Activated naive CD8-positive, alpha-beta T cell treated with anti-CD3 and anti-CD28 coated beads, Interleukin-2, amount 10 ng/mL, durations not matched to agents 7 days and 5 days (primary cell): ENCODE measurements at regions of chr2 and their contacts with region 1.

Region 1: DNA sequence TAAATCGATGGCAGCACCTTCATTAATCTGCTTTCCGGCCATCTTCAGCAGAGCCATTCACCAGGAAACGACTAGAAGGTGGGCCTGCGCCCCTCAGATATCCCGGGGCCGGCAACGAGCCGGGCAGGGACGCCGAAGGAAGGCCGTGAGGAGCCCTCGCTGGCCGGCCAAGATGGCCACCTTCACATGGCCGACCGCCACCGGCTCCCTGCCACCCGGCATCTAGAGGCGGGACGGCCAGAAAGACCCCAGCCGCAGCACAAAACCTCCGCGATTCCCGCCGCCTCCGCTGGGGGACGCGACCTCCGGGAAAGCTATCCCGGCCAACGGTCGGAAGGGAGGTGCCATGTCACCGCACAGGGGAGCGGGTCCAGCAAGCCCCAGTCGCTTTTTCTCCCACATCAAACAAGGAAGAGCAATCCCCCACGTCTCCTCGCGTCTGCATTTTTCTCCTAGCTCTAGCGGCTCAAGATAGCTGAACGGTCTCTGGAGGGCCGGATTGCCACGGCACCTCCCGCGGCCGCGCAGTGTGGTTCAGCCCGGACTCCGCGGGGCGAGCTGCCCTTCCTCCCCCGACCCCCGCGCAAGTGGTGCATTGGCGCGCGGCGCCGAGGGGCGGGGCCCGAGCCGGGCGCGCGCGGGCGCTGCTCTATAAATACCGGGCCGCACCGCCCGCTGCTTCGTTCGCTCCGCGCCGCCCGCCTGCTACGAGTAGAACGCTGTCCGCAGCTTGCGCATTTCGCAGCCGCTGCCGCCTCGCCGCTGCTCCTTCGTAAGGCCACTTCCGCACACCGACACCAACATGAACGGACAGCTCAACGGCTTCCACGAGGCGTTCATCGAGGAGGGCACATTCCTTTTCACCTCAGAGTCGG is at the start of gene MAT2A:
- DNase-seq: peak; percentile 96
- ATAC-seq: peak; percentile 72
- H3K4me3 Mint-ChIP-seq: peak within 1 kb of the TSS; percentile 94
- H3K27ac Mint-ChIP-seq: peak within 1 kb of the TSS; percentile 94
- H3K4me1 Mint-ChIP-seq: peaks cover 33% of the 10 kb centered on the region
- H3K27me3 Mint-ChIP-seq: no peaks in the 10 kb centered on the region
- total RNA-seq, gene MAT2A: 218 to 222 TPM

Region 2: DNA sequence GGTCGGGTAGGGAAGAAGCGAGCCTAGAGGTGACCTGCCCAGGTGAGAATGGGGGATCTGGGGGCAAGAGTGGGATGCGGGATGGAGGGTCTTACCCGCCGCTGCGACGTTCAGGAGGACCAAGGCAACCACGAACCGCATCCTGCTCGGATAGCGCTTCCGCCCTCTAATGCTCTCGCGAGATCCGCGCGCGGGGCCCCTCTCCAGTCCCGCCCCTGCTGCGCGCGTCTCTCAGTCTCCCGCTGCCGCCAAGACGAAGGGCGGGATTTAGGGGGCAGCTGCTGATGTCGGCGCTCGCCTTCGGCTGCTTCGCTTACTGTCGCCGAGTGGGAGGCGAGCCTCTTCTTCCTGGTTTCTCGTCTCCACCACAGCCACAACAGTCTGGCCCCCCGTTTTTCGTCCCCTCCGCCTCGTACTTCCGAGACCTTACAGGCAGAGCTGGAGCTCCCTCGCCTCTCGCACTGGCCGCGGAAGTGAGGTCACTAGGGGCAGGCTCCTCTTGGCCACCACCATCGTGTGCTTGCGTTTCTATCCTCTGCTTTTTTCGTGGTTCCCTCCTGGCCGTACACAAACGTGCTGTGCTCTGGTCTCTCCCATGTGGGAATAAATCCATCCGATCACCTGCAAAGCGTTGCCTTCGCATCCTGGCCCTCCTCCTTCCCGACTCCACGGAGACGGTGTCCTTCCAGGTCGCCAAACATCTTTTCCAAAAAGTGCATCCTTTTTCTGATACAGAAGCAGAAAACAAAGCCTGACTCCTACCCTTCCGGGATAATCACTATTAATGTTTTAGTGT is 210.7 kb before region 1 on chr2 and contains the start of gene TGOLN2:
- POLR2A ChIA-PET with region 1: interaction called, 32 read pairs
- DNase-seq: peak; percentile 97
- ATAC-seq: peak; percentile 84
- H3K4me3 Mint-ChIP-seq: peak within 1 kb of the TSS; percentile 99
- H3K27ac Mint-ChIP-seq: peak within 1 kb of the TSS; percentile 100
- H3K4me1 Mint-ChIP-seq: peaks cover 25% of the 10 kb centered on the region
- H3K27me3 Mint-ChIP-seq: no peaks in the 10 kb centered on the region
- total RNA-seq, gene TGOLN2: 144 to 148 TPM

Region 3: DNA sequence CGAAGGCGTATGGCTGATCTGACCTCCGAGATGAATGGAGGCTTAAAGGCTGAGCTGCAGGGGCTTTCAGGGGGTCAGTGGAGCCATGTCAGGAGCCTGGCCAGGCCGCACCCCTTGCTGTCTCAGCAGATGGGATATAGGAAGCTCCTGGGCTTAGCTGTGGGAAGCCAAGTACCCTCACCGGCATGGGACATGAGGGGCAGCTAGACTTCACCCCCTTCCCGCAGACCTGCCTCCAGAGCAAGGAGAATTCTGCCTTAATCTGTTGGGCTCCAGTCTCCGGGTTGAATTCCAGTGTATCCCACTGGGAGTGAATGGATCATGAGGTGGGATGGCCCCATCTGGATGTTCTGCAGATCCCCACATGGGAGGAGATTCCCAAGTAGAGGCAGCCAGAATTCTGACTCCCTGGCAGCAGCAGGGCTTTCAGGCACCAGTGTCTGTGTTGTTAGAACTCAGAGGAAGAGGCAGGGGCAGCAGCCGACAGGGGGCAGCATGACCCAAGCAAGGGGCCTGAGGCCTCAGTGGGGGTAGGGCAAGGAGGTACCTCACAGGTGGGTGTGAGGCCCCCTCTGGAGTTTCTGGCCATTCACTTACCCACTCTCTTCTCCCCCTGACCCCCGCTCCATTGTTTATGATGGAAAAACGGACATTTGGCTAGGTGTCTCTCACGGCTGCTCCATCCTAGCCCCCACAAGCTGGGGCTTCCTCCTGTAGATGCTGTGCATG is 147.6 kb before region 1 on chr2:
- POLR2A ChIA-PET with region 1: interaction called, 23 read pairs
- DNase-seq: peak; percentile 84
- ATAC-seq: peak; percentile 68
- H3K4me3 Mint-ChIP-seq: no peak overlapping the region
- H3K27ac Mint-ChIP-seq: peak overlapping the region; percentile 38
- H3K4me1 Mint-ChIP-seq: peaks cover 8% of the 10 kb centered on the region
- H3K27me3 Mint-ChIP-seq: no peaks in the 10 kb centered on the region

Region 4: DNA sequence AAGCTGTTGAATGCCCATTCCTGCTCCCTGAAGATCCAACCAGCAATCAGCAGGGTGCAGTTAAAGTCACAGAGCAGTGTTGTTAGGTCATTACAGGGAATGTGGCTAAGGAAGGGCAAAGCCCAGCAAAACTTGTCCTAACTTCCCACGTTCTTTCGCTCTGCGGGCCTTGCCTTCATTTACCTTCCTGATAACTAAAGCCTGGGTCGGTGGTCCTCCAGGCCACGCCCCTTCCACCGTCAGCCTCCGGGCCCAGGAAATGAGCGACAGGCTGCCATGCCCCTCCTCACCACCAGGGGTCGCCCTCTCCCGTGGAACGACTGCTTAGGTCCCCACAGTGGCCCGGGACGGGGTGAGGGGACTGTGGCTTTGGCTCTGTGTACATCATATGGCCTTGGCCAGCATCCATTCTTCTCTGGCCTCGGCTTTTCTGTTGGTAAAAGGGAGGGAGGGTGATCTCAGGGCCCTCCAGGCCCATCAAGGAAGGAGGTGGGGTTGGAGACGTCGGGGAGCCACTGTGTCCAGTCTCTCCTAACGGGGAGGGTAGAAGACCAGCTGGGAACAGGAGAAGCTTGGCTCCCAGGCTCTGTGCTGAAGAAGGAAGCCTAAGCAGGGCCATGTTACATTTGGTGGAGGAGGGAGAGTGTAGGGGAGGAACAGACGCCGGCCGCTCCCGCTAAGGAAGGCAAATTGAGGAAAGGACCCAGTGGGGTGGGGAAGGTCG is 118.0 kb before region 1 on chr2:
- POLR2A ChIA-PET with region 1: interaction called, 113 read pairs
- DNase-seq: peak; percentile 95
- ATAC-seq: peak; percentile 55
- H3K4me3 Mint-ChIP-seq: peak overlapping the region; percentile 73
- H3K27ac Mint-ChIP-seq: peak overlapping the region; percentile 87
- H3K4me1 Mint-ChIP-seq: peaks cover 26% of the 10 kb centered on the region
- H3K27me3 Mint-ChIP-seq: no peaks in the 10 kb centered on the region

Region 5: GRCh38 chr2:85437488-85438284 is 101.0 kb before region 1 on chr2:
- POLR2A ChIA-PET with region 1: interaction called, 116 read pairs
- DNase-seq: peak; percentile 80
- ATAC-seq: peak; percentile 75
- H3K4me3 Mint-ChIP-seq: peak overlapping the region; percentile 84
- H3K27ac Mint-ChIP-seq: peak overlapping the region; percentile 93
- H3K4me1 Mint-ChIP-seq: peaks cover 33% of the 10 kb centered on the region
- H3K27me3 Mint-ChIP-seq: no peaks in the 10 kb centered on the region

Region 6: DNA sequence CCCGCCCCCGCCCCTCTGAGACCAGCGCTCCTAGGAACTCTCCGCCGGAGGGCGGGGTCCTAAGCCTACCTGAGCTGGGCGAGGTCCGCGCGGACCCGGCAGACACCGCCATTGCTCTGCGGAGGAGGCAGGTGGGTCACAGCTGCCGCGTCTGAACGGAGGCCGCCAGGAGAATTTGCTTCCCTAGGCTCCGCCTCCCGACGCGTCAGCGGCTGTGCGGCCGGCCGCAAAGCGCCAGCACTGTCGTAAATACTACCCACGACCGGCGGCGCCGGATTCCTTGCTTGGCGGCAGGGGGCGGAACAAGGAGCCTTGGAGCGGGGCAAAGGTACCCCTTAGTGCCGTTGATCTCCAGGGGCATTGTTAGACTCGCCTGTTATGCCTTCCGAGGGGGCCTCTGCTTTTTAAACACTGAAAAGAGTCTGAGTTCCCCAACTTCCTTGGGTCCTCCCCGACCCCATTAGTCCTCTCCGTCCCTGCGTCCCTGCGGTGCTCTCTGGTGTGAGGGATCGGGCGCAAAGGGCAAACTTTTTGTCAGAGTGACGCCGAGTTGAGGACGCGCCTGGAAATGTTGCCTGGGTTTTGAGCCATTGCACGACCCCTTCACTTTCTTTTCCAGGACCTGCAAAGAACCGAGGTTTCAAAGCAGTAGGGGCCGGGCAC is 22.7 kb after region 1 on chr2 and contains the start of gene GGCX:
- POLR2A ChIA-PET with region 1: interaction called, 24 read pairs
- DNase-seq: peak; percentile 89
- ATAC-seq: peak; percentile 95
- H3K4me3 Mint-ChIP-seq: peak within 1 kb of the TSS; percentile 97
- H3K27ac Mint-ChIP-seq: peak within 1 kb of the TSS; percentile 95
- H3K4me1 Mint-ChIP-seq: peaks cover 24% of the 10 kb centered on the region
- H3K27me3 Mint-ChIP-seq: no peaks in the 10 kb centered on the region
- total RNA-seq, gene GGCX: 24.8 to 26.8 TPM

Region 7: GRCh38 chr2:85595301-85596025 is 56.7 kb after region 1 on chr2 and contains the start of gene RNF181:
- POLR2A ChIA-PET with region 1: interaction called, 12 read pairs
- DNase-seq: peak; percentile 83
- ATAC-seq: peak; percentile 100
- H3K4me3 Mint-ChIP-seq: peak within 1 kb of the TSS; percentile 95
- H3K27ac Mint-ChIP-seq: peak within 1 kb of the TSS; percentile 93
- H3K4me1 Mint-ChIP-seq: peaks cover 27% of the 10 kb centered on the region
- H3K27me3 Mint-ChIP-seq: no peaks in the 10 kb centered on the region
- total RNA-seq, gene RNF181: 96.4 to 97.4 TPM

Region 8: GRCh38 chr2:85792783-85793441 is 254.2 kb after region 1 on chr2:
- POLR2A ChIA-PET with region 1: no interaction called
- DNase-seq: no peak
- ATAC-seq: no peak
- H3K4me3 Mint-ChIP-seq: no peak overlapping the region
- H3K27ac Mint-ChIP-seq: no peak overlapping the region
- H3K4me1 Mint-ChIP-seq: no peaks in the 10 kb centered on the region
- H3K27me3 Mint-ChIP-seq: peaks cover 24% of the 10 kb centered on the region

Region 9: GRCh38 chr2:85886590-85886989 is 347.9 kb after region 1 on chr2:
- POLR2A ChIA-PET with region 1: no interaction called
- DNase-seq: no peak
- ATAC-seq: no peak
- H3K4me3 Mint-ChIP-seq: peak overlapping the region; percentile 85
- H3K27ac Mint-ChIP-seq: peak overlapping the region; percentile 23
- H3K4me1 Mint-ChIP-seq: peaks cover 52% of the 10 kb centered on the region
- H3K27me3 Mint-ChIP-seq: no peaks in the 10 kb centered on the region